ENCODE measurements at regions of chr5 and their contacts with region 1.

Region 1: DNA sequence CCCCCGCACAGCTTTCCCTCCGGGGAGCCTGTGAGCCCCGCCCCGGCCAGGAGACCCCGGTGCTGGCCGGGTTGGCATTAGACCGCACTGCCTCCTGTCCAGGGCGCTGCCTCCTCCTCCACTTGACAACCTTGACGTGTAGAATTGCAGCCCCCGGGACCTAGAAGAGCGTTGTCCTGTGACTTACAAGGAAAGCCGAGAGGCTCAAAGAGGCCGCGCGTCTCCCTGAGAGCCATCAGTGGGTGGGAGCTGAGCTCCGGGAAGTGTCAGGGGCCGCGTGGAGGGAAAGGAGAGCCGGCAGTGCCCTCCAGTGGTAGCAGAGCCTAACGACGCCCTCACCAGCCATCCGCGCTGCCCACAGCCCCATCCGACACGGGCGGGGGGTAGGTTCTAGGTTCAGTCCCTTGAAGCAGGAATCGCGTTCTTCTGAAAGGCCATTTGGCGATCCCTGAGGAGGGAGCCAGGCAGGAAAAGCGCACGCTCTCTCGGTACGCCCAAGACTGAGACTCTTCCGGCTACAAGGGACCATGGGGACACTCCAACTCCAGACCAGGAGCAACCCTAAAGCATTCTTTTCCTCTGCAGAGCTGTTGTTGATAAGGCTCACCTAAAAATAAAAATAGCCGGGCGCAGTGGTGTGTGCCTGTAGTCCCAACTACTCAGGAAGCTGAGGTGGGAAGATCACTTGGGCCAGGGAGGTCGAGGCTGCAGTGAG is 40.6 kb upstream of the SAP30L start:
- DNase-seq: peak; percentile 92
- H3K4me3 ChIP-seq: peak overlapping the region in 1 of 2 experiments; percentile 24; a peak in 1 of 4 replicates
- H3K27ac ChIP-seq: no peak overlapping the region
- H3K4me1 ChIP-seq: peaks cover 4 to 11% of the 10 kb centered on the region in 2 experiments; a peak in 2 of 4 replicates
- H3K27me3 ChIP-seq: no peaks in the 10 kb centered on the region
- CTCF ChIP-seq: peak; percentile 78
- EP300 ChIP-seq: no peak
- RAD21 ChIP-seq: peak; percentile 97

Region 2: GRCh38 chr5:154065971-154066370 is 339.3 kb before region 1 on chr5:
- CTCF ChIA-PET with region 1: interaction called, 35 read pairs
- POLR2A ChIA-PET with region 1: no interaction called
- DNase-seq: no peak
- H3K4me3 ChIP-seq: no peak overlapping the region
- H3K27ac ChIP-seq: no peak overlapping the region
- H3K4me1 ChIP-seq: no peaks in the 10 kb centered on the region; a peak in 1 of 4 replicates
- H3K27me3 ChIP-seq: no peaks in the 10 kb centered on the region
- CTCF ChIP-seq: no peak
- EP300 ChIP-seq: no peak
- RAD21 ChIP-seq: no peak

Region 3: GRCh38 chr5:154189819-154190594 is 215.2 kb before region 1 on chr5:
- CTCF ChIA-PET with region 1: interaction called, 55 read pairs
- POLR2A ChIA-PET with region 1: interaction called, 6 read pairs
- DNase-seq: peak; percentile 97
- H3K4me3 ChIP-seq: peak overlapping the region; percentile 88 to 96
- H3K27ac ChIP-seq: peak overlapping the region; percentile 38 to 55; a peak in 3 of 4 replicates
- H3K4me1 ChIP-seq: peaks cover 17 to 31% of the 10 kb centered on the region in 2 experiments; a peak in 3 of 4 replicates
- H3K27me3 ChIP-seq: no peaks in the 10 kb centered on the region
- CTCF ChIP-seq: peak; percentile 60
- EP300 ChIP-seq: no peak
- RAD21 ChIP-seq: no peak

Region 4: DNA sequence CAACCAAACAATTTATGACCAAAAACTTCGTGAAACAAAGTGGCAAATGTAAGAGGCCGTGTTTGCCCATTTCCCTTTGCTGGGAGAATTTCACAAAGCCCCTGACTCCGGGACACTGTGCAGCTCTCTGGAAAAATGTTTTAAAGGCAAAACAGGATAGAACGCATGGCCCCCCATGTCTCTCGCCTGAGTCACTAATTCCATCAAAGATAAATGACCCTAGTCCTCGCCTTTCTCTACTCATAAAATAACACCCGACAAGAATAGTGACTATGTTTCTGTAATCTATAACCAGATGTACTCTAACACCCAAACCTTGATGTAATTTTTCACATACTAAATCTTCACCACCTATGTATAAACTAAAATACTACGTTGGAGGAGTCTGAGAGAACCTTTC is 15.1 kb before region 1 on chr5:
- CTCF ChIA-PET with region 1: interaction called, 10 read pairs
- POLR2A ChIA-PET with region 1: no interaction called
- DNase-seq: no peak
- H3K4me3 ChIP-seq: no peak overlapping the region
- H3K27ac ChIP-seq: peak overlapping the region in 1 of 2 experiments; percentile 25; a peak in 1 of 4 replicates
- H3K4me1 ChIP-seq: no peaks in the 10 kb centered on the region; a peak in 1 of 4 replicates
- H3K27me3 ChIP-seq: no peaks in the 10 kb centered on the region
- CTCF ChIP-seq: no peak
- EP300 ChIP-seq: no peak
- RAD21 ChIP-seq: no peak

Region 5: GRCh38 chr5:154593071-154593470 is 187.8 kb after region 1 on chr5:
- CTCF ChIA-PET with region 1: no interaction called
- POLR2A ChIA-PET with region 1: no interaction called
- DNase-seq: no peak
- H3K4me3 ChIP-seq: no peak overlapping the region
- H3K27ac ChIP-seq: no peak overlapping the region
- H3K4me1 ChIP-seq: no peaks in the 10 kb centered on the region; a peak in 1 of 4 replicates
- H3K27me3 ChIP-seq: no peaks in the 10 kb centered on the region
- CTCF ChIP-seq: no peak
- EP300 ChIP-seq: no peak
- RAD21 ChIP-seq: no peak

Region 6: DNA sequence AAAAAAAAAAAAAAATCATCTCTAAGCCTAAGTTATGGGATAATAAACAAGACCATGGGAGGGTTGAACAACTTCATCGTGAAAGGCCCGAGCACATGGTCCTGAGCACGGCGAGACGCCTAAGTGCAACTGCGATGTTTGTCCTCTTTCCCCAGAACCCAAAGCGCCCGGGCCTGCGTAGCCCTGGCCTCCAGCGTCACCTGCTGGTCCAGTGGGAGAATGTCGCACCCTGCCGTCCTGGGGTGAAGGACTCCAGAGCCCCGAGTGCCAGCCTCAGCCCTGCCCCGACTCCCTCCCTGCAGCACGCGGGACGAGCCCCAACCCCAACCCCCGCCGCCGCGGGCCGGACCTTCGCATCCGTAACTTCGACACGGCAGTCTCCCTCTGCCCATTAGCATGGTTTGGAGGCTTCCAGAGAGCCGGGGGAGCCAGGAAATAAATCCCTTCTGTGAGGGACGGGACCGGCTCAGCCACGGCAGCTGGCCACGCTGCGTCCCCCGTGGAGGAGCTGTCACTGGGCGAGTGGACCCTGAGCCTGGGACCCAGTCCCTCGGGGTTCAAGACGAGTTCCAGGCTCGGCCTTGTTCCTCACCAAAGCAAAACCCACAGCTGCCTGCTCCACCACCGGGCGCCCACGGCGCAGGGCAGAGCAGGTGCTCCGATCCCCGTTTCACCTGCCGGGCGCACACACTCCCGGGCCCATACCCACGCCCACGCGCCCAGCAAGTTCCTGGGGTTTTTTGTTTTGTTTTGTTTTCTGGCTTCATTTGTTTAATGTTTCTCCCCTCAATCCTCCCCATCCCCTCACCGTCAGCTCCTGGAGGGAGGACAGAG is 205.3 kb after region 1 on chr5:
- CTCF ChIA-PET with region 1: interaction called, 14 read pairs
- POLR2A ChIA-PET with region 1: no interaction called
- DNase-seq: peak; percentile 96
- H3K4me3 ChIP-seq: peak overlapping the region; percentile 14 to 47; a peak in 3 of 4 replicates
- H3K27ac ChIP-seq: no peak overlapping the region
- H3K4me1 ChIP-seq: peaks cover 0 to 37% of the 10 kb centered on the region in 2 experiments; a peak in 1 of 4 replicates
- H3K27me3 ChIP-seq: peaks cover 7% of the 10 kb centered on the region
- CTCF ChIP-seq: peak; percentile 86
- EP300 ChIP-seq: peak in 1 of 2 experiments; percentile 11; a peak in 1 of 4 replicates
- RAD21 ChIP-seq: peak; percentile 100